ENCODE measurements at regions of chr17 and their contacts with region 1.

Region 1: GRCh38 chr17:48878918-48879898 is 13.4 kb upstream of the ATP5MC1 start:
- DNase-seq: peak in 2 of 4 donors; percentile 56 to 72
- ATAC-seq: peak; percentile 93
- H3K4me3 ChIP-seq: no peak overlapping the region
- H3K27ac ChIP-seq: no peak overlapping the region
- H3K4me1 ChIP-seq: peaks cover 0 to 4% of the 10 kb centered on the region in 2 donors
- H3K27me3 ChIP-seq: no peaks in the 10 kb centered on the region
- CTCF ChIP-seq: peak; percentile 87 to 91

Region 2: DNA sequence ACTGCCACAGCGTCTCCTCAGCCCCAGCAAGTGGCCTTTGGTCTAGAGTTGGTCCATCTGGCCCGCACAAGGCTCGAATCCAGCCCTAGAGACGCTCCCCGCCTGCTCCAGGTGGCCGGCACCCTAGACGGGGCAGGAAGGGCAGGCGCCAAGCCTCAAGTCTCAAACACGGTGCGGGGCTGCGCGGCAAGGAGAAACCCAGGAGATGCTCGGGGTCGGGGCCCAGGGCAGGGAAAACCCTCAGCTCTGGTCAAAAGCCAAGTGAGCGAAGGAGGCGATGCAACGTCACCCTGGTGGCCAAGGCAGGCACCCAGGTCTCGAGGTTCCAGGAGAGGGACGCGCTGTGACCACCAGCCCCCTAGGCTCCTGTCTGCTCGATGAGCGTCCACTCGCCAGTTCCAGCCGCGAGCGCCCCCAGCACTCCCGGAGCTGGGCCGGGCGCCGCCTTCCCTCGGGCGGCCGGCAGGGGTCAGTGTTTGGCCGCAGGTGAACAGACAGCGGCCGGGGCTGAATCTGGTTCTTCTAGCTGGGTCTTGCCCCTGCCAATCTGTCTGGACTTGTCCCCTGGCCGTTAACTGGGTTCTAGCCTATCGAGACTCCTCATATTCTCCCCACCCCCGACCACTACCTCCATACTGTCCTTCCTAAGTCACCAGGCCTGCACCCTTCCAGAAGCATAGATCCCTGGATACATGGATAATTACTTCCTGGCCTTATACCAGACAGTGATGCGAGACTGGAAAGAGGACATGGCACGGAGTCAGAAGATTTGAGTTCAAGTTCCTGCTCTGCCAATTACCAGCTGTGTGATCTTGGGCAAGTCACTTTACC is 200.9 kb before region 1 on chr17:
- intact Hi-C with region 1: loop called in 1 of 2 experiments (anchors 10 kb)
- DNase-seq: peak; percentile 39 to 89 (median 52)
- ATAC-seq: peak; percentile 99
- H3K4me3 ChIP-seq: no peak overlapping the region
- H3K27ac ChIP-seq: no peak overlapping the region
- H3K4me1 ChIP-seq: peaks cover 4% of the 10 kb centered on the region in 2 donors
- H3K27me3 ChIP-seq: peaks cover 8 to 92% of the 10 kb centered on the region in 2 donors
- CTCF ChIP-seq: peak; percentile 90 to 96

Region 3: DNA sequence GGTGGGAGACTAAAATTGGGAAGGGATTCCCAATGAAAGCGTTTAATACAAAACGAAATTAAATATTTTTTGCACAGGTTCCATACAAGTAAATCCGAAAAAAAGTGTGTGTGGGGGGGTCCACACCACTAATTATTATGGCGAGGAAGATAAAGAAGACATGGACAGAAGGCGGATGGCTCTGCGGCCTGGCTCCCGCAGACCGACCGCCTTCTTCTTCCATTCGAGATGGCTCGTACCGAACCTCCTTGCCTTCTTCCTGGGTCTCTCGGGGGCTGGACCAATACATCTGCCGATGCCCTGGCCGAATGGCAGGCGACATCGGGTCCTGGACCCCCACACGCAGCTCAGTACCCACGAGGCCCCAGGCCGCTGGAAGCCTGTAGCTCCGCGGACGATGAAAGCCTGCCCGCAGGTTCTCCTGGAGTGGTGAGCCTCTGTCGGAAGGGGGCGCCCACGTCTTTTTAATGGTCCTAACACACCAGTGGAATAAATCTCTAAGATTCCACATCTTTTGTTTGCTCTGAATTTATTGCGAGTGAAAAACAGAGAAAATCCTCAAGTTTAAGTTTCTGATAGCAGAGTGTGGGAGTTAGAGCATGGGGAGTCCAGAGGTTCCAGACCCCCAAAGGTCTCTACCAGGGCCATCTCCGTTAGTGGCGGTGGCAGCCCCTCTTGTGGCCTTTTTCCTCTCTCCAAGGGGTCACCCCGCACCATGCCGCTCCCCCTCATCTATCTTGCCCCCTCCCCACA is 154.8 kb before region 1 on chr17:
- intact Hi-C with region 1: loop called in 1 of 2 experiments (anchors 5 kb)
- DNase-seq: peak; percentile 68 to 87 (median 80)
- ATAC-seq: peak; percentile 93
- H3K4me3 ChIP-seq: no peak overlapping the region
- H3K27ac ChIP-seq: no peak overlapping the region
- H3K4me1 ChIP-seq: peaks cover 9 to 32% of the 10 kb centered on the region in 2 donors
- H3K27me3 ChIP-seq: peaks cover 98 to 100% of the 10 kb centered on the region in 2 donors
- CTCF ChIP-seq: peak; percentile 62 to 71

Region 4: GRCh38 chr17:48804925-48805411 is 74.2 kb before region 1 on chr17:
- intact Hi-C with region 1: loop called in 1 of 2 experiments (anchors 10 kb)
- DNase-seq: peak in 3 of 4 donors; percentile 54 to 85 (median 56)
- ATAC-seq: peak; percentile 84
- H3K4me3 ChIP-seq: no peak overlapping the region
- H3K27ac ChIP-seq: no peak overlapping the region
- H3K4me1 ChIP-seq: peaks cover 0 to 8% of the 10 kb centered on the region in 2 donors
- H3K27me3 ChIP-seq: peaks cover 0 to 1% of the 10 kb centered on the region in 2 donors
- CTCF ChIP-seq: peak; percentile 88 to 96

Region 5: GRCh38 chr17:48816774-48817590 is 62.2 kb before region 1 on chr17 and contains the start of gene TTLL6:
- intact Hi-C with region 1: loop called in 1 of 2 experiments (anchors 5 kb)
- DNase-seq: peak; percentile 74 to 91 (median 89)
- ATAC-seq: peak; percentile 98
- H3K4me3 ChIP-seq: peak within 1 kb of the TSS; percentile 24 to 32
- H3K27ac ChIP-seq: no peak within 1 kb of the TSS
- H3K4me1 ChIP-seq: peaks cover 7 to 14% of the 10 kb centered on the region in 2 donors
- H3K27me3 ChIP-seq: peaks cover 0 to 60% of the 10 kb centered on the region in 2 donors
- CTCF ChIP-seq: no peak
- polyA plus RNA-seq, gene TTLL6: 0.50 to 2.4 (median 1.7) TPM

Region 6: DNA sequence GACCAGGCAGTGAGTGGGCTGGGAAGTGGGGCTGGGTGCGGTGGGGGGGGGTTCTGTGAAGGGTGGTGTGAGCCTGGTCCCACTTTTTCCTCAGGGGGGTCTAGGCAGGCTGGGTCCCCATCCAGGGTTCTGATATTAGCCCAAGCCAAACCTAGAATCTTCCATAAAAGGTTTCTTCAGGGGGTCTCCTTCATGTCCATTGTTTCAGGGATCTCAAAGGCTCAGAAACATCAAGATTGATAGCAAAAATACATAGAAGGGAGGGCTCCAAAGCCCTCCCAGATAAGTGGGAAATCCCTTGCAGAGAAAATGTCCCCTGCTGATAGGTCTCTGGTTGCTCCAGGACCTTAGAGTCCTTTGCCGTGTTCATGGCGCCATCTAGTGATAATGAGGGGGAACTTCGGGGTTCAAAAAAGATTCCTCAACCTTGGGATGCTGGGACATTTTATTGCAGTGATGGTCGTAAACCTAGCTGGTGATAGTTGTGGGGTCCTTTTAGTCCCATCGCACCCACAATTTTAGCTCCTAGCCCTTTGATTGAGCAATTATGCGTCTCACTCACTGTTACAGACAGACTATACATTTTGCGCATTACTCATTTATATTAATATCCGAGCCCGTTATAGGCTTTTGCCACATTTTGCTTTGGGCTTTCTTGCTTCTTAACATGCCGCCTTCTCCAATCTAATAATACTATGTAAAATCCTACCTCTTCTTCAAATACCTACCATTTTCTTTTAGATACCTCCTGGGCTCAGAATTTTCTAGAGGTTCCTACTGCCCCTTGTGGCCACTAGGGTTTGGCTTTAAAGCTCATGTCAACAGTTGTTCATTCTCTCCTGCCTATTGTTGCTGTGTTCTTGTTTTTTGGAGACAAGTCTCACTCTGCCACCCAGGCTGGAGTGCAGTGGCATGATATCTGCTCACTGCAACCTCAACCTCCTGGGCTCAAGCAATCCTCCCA is 153.0 kb after region 1 on chr17:
- intact Hi-C with region 1: loop called in 1 of 2 experiments (anchors 10 kb)
- DNase-seq: peak in 2 of 4 donors; percentile 74 to 87
- ATAC-seq: peak; percentile 94
- H3K4me3 ChIP-seq: no peak overlapping the region
- H3K27ac ChIP-seq: no peak overlapping the region
- H3K4me1 ChIP-seq: no peaks in the 10 kb centered on the region
- H3K27me3 ChIP-seq: peaks cover 0 to 50% of the 10 kb centered on the region in 2 donors
- CTCF ChIP-seq: peak; percentile 57 to 70

Measured in left lung (tissue), 14 donors.